ENCODE measurements at regions of chr19 and their contacts with region 1.

Region 1: GRCh38 chr19:58097781-58098681 is at the start of gene ZSCAN18:
- DNase-seq: peak; percentile 96
- H3K4me3 Mint-ChIP-seq: peak within 1 kb of the TSS; percentile 77
- H3K27ac Mint-ChIP-seq: peak within 1 kb of the TSS; percentile 92
- H3K4me1 Mint-ChIP-seq: peaks cover 11% of the 10 kb centered on the region
- H3K27me3 Mint-ChIP-seq: no peaks in the 10 kb centered on the region
- total RNA-seq, gene ZSCAN18: 13.8 to 15.7 TPM

Region 2: DNA sequence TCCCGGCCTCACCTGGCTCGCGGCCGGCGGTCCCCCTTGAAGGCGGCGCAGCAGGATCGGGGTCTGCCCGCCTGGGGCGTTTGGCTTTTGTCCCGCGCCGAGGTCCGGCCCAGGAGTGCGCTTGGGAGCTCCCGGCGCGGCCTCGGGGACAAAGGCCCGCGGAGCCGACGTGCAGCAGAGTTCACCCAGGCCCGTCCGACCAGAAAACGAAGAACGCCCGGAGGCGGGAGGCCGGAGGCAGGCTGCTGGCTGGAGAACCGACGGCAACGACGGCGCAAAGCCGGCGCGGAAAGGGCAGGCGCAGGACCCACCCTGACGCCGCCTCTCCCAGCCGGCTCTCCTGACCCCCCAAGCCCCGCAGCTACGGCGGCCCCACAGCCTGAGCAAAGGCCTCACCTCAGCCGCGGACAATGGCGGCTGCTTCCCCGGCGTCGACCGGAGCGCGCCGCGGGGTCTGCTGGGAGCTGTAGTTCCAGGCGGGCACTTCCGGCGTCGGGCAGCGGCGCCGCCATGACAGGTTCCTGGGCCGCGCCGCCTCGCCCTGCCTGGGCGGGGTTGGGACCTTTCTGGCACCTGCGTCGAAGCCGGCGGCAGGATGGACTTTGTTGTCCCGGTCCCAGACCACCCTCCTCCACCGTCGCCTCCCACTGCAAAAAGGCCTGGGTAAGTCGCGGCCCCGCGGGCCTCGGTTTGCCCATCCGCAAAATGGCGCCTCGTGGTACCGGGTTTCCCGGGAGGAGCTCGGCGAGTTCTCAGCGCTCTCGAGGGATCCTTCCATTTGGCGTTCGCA is 95.5 kb before region 1 on chr19 and contains the start of gene ZNF606:
- CTCF ChIA-PET with region 1: no interaction called
- POLR2A ChIA-PET with region 1: no interaction called
- intact Hi-C with region 1: loop called (anchors 2 kb)
- DNase-seq: peak; percentile 88
- H3K4me3 Mint-ChIP-seq: peak within 1 kb of the TSS; percentile 78
- H3K27ac Mint-ChIP-seq: peak within 1 kb of the TSS; percentile 56
- H3K4me1 Mint-ChIP-seq: peaks cover 26% of the 10 kb centered on the region
- H3K27me3 Mint-ChIP-seq: no peaks in the 10 kb centered on the region
- total RNA-seq, gene ZNF606: 5.1 to 5.8 TPM

Region 3: DNA sequence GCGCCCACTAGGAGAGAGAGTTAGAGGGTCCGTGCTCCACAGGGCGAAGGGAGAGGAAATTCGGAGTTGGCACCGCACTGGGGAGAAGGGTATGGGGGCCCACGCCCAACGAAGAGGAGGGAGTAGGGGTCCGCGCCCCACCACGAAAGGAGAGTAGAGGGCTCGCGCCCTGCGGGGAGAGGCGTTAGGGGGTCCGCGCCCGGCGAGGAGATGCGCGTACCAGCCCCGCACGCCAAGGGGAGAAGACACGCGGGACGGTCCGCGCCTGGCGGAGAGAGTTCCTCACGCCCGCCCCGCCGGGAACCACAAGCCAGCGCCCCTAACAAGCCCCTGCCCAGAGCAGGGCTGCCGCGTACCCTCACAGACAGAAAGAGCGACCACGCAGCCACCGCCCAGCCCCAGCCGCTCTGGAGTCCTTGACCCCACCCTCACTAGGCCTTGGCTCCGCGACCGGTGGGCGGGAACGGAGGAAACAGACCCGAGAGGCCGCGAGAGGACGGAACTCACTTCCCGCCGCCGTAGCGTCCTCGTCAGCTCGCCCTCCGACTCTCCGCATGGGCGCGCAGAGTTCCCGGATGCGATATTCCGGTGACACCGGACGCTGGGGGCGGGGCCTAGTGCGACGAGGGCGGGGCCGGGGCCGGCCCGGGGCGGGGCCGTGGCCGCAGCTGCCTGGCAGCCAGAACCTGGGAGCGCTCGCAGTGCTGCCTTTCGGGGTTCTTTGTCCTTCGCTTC is 20.0 kb after region 1 on chr19:
- CTCF ChIA-PET with region 1: no interaction called
- POLR2A ChIA-PET with region 1: no interaction called
- intact Hi-C with region 1: no loop called
- DNase-seq: no peak
- H3K4me3 Mint-ChIP-seq: no peak overlapping the region
- H3K27ac Mint-ChIP-seq: no peak overlapping the region
- H3K4me1 Mint-ChIP-seq: peaks cover 2% of the 10 kb centered on the region
- H3K27me3 Mint-ChIP-seq: peaks cover 2% of the 10 kb centered on the region